AG04450 (cell line): ENCODE measurements at regions of chr7 and their contacts with region 1.

Region 1: GRCh38 chr7:44956157-44956766 is 22.6 kb downstream of the MYO1G start:
- DNase-seq: no peak
- H3K4me3 ChIP-seq: no peak overlapping the region
- H3K27ac ChIP-seq: no peak overlapping the region
- H3K27me3 ChIP-seq: peaks cover 19% of the 10 kb centered on the region
- CTCF ChIP-seq: no peak

Region 2: GRCh38 chr7:44615149-44615611 is 341.1 kb before region 1 on chr7:
- CTCF ChIA-PET with region 1: no interaction called
- POLR2A ChIA-PET with region 1: interaction called, 10 read pairs
- DNase-seq: no peak
- H3K4me3 ChIP-seq: no peak overlapping the region
- H3K27ac ChIP-seq: peak overlapping the region; percentile 31
- H3K27me3 ChIP-seq: no peaks in the 10 kb centered on the region
- CTCF ChIP-seq: no peak